Breast epithelium (tissue), 4 donors: ENCODE measurements at regions of chr6 and their contacts with region 1.

Region 1: DNA sequence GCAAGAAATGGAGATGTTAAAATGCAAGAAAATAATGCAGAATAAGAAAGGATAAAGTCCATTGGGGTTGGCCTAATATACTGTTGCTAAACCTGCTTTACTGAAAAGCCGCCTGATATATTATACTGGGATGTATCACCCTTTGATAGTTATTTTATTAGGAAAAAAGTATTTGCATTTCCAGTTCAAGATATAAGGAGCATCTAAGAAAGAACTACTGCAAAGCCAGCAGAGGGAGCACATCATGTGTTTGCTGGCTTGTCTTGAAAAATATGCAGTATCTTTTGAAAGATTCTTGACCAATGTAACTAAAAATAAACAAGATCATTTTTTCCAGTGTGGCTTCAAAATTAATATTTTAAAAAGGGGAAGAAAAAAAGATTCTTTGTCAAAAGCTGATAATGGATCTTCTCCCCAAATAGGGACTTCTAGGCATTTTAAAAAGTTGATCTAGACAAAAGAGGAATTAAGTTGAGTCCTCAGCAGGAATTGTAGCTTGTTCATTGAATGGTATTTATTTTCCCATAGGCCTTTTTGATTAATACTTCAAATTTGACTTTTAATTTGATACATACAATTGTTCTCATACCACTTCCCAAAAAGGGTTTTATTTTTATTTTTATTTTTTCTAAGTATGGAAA is 214.9 kb downstream of the ZFAND3 start:
- DNase-seq: no peak
- H3K4me3 ChIP-seq: no peak overlapping the region
- H3K27ac ChIP-seq: no peak overlapping the region
- H3K4me1 ChIP-seq: no peaks in the 10 kb centered on the region
- H3K27me3 ChIP-seq: no peaks in the 10 kb centered on the region
- CTCF ChIP-seq: peak in 2 of 3 donors; percentile 11 to 25
- POLR2A ChIP-seq: no peak

Region 2: DNA sequence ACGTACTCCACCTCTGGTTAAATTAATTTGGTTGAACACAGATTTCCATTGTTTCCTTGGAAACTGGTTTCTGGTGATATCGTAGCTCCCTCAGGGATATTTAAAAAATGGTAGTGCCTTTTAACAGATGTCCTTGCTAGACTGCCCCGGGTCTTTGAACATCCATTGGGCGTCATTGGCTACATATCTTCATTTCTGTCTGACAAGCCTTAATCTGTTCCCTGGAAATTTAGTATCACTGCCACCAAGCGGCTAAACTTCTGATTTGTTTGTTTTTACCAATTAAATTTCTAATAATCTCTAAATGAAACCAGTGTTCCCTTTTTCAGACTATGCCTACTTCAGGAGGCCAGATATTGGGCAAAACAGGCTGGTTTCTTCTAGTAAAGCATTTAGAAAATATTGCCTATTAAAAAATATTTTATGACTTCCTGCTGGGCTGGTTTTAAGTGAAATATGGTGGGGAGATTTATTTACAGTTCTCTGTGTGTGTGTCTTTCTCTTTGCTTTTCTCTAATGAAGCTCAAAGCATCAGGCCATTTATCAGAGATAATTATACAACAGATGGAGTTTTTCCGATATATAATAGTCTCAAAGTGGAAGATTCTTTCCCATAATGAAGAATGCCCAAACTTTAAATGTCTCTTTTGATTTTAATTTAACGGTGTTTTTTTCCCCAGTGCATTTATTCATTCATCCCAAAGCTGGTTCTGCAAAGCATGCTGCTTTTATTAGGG is 34.6 kb after region 1 on chr6:
- intact Hi-C with region 1: loop called (anchors 1 kb)
- DNase-seq: no peak
- H3K4me3 ChIP-seq: no peak overlapping the region
- H3K27ac ChIP-seq: no peak overlapping the region
- H3K4me1 ChIP-seq: no peaks in the 10 kb centered on the region
- H3K27me3 ChIP-seq: no peaks in the 10 kb centered on the region
- CTCF ChIP-seq: no peak
- POLR2A ChIP-seq: no peak